ENCODE measurements at regions of chr9 and their contacts with region 1.

Region 1: DNA sequence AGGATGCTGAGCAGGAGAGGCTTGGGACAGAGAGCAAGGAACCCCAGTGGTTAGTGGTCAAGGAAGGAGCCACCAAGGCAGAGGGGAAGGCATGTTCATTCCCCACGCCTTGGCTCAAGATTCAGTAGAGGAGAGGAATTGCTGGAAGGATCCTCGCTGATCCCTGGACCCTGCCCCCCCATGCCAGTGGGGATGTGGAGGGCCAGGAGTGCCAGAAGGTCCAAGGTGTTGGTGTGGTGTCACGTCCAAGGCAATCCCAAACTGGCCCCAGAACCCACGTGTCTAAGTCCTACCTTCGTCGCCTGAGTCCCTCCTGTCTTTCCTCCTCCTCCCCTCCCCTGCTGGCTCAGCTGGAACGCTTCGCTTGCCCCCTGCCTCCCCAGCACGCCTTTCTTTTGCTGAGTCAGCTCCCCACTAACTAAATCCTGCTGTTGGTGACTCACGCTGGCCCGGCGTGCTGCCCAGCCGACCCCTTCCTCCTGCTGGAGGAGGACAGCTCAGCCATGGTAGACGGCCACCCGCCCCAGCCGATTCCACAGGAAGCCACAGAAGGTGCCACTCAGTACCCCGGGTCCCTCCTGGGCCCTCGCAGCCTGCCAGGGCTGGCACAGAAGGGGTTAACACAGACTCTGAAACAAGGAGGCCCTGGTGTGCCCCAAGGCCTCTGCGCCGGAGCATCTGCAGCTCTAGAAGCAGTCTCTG is 37.6 kb upstream of the ORM1 start:
- DNase-seq: no peak
- H3K4me3 ChIP-seq: no peak overlapping the region
- H3K27ac ChIP-seq: no peak overlapping the region
- H3K4me1 ChIP-seq: no peaks in the 10 kb centered on the region
- H3K27me3 ChIP-seq: no peaks in the 10 kb centered on the region
- CTCF ChIP-seq: no peak

Region 2: GRCh38 chr9:113645227-113645977 is 639.9 kb before region 1 on chr9:
- intact Hi-C with region 1: no loop called
- DNase-seq: no peak
- H3K4me3 ChIP-seq: no peak overlapping the region
- H3K27ac ChIP-seq: no peak overlapping the region
- H3K4me1 ChIP-seq: no peaks in the 10 kb centered on the region
- H3K27me3 ChIP-seq: no peaks in the 10 kb centered on the region
- CTCF ChIP-seq: no peak

Region 3: DNA sequence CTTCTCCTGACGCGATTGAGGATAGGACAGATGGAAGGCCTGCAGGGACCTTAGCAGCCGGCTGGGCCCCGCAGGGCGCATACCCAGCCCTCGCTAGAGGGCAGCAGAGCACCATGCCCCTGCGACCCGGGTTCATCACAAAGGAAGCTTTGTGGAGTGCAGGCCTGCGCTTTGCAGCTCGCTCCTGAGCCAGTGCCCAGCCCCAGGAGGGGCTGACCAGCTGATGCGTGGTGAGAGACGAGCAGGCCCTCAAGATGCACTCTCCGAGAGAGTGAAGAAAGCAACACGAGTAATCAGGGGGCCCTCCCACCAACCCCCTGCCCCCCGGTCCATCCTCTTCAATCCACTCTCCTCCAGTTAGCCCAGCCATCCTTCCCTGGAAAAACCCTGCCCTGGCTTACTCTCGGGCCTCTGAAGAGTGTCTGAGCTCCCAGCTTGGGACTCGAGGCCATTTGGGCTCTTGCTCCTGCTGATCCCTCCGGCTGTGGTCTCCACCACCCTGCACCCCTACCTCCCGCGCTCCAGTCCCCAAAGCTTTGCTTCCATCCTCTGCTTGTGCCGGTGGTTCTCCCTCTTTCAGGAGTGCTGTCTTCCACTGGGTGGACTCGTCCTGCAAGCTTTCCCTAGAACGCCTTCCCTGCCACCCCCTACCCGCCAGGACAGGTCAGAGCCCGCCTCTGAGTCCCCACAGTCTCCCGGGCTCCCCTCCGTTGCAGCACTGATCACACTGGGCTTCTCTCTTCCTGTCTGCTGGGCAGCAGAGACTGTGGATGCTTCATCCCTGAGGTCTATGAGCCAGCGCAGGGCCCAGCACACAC is 177.1 kb before region 1 on chr9:
- intact Hi-C with region 1: loop called (anchors 5 kb)
- DNase-seq: peak; percentile 81
- H3K4me3 ChIP-seq: no peak overlapping the region
- H3K27ac ChIP-seq: no peak overlapping the region
- H3K4me1 ChIP-seq: no peaks in the 10 kb centered on the region
- H3K27me3 ChIP-seq: no peaks in the 10 kb centered on the region
- CTCF ChIP-seq: peak; percentile 93

Region 4: DNA sequence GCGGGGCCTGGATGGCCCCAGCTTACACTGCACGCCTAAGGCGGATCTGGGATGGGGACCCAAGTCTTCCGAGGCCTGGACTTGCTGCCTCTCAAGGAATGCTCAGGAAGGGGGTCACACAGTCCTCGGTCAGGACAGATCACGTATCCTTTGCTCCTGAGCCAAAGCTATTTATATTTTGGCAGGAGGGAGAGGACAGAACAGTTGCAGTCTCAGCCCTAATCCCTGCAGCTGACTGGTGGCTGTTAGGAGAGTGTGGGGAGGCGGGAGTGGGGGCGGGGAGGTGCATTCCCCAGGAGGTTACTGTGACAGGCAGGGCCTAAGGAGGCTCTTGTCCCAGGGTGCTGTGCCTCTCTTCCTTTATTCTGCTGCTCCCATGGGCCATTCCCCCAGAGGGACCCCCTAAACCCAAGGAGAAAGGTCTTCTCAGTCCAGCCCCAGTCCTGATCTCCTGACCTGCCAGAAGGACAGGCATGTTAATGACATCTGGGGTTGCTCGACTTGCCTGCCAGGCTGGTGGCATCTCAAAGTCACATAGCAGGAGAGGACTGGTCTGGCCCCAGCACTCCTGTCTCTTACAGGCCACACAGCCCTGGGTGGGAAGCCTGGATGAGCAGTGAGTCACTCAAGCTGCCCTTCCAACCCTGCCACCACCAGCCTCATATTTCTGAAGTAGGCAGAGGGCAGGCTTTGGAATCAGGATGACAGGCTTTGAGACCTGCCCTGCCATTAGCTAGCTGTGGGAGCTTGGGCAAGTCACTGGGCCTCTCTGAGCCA is 78.1 kb before region 1 on chr9:
- intact Hi-C with region 1: no loop called
- DNase-seq: no peak
- H3K4me3 ChIP-seq: no peak overlapping the region
- H3K27ac ChIP-seq: no peak overlapping the region
- H3K4me1 ChIP-seq: no peaks in the 10 kb centered on the region
- H3K27me3 ChIP-seq: no peaks in the 10 kb centered on the region
- CTCF ChIP-seq: no peak

Region 5: DNA sequence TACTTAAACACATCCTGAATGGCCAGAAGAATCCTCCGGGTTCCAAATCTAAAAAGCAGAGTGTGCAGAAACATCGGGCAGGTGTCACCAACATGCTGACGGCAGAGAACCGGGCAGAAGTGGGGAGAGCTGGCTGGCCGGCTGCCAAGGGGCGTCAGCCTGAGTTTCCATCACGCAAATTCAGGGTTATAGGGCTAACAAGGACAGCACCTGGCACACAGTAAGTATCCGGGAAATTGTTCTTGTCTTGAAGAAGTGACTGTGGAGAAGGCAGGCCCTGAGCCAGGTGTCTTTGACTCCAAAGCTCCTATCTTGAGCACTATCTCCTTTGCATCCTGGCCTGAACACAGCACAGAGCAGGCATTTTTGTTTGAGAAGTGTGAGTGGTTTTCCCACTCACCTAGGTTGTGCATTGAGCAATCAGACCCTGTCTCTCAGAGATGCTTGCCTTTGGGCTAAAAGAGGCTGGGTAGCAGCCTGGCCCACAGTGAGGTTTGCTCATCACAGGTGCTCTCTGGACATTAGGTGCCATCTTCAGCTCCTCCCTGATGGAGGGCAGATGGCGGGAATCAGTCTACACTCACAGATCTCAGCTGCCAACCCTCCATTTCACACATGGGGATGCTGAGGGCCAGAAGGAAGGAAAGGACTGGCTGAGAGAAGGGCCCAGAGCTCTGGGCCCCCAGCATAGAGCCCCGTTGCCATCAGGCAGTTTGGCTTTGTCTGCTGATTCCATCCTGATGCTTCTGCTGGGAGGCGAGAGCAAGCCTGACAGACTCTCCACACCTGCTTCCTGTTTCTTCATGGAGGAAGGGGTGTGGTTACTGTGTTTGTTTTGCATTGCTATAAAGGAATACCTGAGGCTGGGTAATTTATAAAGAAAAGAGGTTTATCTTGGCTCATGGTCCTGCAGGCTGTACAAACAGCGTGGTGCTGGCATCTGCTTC is 167.2 kb after region 1 on chr9:
- intact Hi-C with region 1: no loop called
- DNase-seq: peak; percentile 39
- H3K4me3 ChIP-seq: no peak overlapping the region
- H3K27ac ChIP-seq: no peak overlapping the region
- H3K4me1 ChIP-seq: no peaks in the 10 kb centered on the region
- H3K27me3 ChIP-seq: no peaks in the 10 kb centered on the region
- CTCF ChIP-seq: no peak

Region 6: GRCh38 chr9:114884787-114885452 is 599.6 kb after region 1 on chr9:
- intact Hi-C with region 1: no loop called
- DNase-seq: peak; percentile 86
- H3K4me3 ChIP-seq: no peak overlapping the region
- H3K27ac ChIP-seq: peak overlapping the region; percentile 41
- H3K4me1 ChIP-seq: no peaks in the 10 kb centered on the region
- H3K27me3 ChIP-seq: no peaks in the 10 kb centered on the region
- CTCF ChIP-seq: no peak

Measured in colonic mucosa (tissue), 4 donors.